Sciatic nerve (tissue), 2 donors: ENCODE measurements at regions of chr11 and their contacts with region 1.

Region 1: GRCh38 chr11:65730484-65730883 is 9.9 kb upstream of the RNASEH2C start:
- DNase-seq: no peak
- ATAC-seq: no peak

Region 2: GRCh38 chr11:65791691-65792213 is 61.3 kb after region 1 on chr11:
- intact Hi-C with region 1: no loop called
- DNase-seq: no peak
- ATAC-seq: peak; percentile 8

Region 3: DNA sequence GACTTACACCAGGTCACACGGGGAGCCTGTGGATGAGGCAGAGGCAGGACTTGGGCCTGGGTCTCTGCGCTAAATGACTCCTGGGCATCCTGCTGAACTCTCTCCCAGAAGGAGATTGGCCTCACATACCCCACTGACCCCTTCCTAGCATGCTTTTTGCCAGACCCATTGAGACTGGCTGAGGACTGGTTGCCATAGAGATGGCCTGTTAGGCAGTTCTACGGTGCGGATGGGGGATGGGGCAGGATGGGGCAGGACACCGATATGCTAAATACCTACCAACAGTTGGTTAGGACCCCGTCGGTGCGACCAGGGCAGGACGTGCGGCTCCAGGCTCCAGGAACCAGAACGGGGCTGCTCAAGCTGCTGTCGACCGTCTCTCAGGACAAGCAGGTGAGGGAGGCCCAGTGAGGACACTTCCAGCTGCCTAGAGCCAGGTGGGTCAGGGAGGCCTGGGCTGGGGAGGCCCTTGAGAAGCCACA is 215.0 kb after region 1 on chr11 and contains the start of gene TSGA10IP:
- intact Hi-C with region 1: no loop called
- DNase-seq: no peak
- ATAC-seq: no peak
- total RNA-seq, gene TSGA10IP: not detected

Region 4: GRCh38 chr11:66489636-66490035 is 759.2 kb after region 1 on chr11:
- intact Hi-C with region 1: loop called (anchors 5 kb)
- DNase-seq: no peak
- ATAC-seq: no peak